A549 (cell line): ENCODE measurements at regions of chr6 and their contacts with region 1.

Region 1: DNA sequence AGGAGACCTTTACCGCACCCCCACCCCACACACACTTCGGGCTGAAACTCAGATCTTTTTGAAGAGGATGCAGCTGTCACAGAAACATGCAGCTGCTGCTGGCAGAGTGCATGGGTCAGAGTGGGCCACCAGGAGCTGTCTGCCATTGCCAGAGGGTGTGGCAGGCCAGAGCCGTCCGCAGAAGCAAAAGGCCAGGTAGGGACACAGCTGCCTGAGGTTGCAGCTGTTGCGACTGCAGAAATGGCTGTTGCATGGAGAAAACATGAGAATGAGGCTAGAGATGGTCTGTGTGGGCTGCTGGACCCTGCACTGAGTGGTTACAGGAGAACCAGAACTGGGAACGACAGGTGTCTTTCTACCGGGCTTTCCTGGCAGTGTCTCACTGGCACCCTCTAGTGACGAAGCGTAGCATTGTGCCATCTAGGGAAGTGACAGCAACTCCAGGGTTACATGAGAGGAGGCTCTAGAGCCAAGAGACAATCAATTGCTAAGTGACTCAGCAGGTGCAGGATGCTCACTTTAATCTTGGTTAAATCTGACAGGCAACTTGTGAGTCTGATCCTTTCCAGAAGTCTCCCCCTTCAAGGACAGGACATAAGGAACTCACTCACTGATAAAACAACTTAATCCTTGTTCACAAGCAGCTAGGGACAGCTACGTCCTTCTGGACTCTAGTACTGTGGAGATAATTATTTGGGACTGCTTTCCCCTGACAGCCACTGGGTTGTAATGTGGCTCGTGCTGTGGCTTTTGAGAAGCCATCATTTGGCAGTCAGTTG is 29.1 kb upstream of the SERPINB9 start:
- DNase-seq: peak; percentile 78 to 83
- ATAC-seq: peak; percentile 99
- H3K4me3 ChIP-seq: no peak overlapping the region
- H3K27ac ChIP-seq: peak overlapping the region; percentile 25 to 38; a peak in 3 of 6 replicates
- H3K4me1 ChIP-seq: peaks cover 7% of the 10 kb centered on the region; the same call in 2 of the 3 replicates
- CTCF ChIP-seq: peak; percentile 89
- EP300 ChIP-seq: no peak
- POLR2A ChIP-seq: no peak
- RAD21 ChIP-seq: peak; percentile 85 to 88

Region 2: DNA sequence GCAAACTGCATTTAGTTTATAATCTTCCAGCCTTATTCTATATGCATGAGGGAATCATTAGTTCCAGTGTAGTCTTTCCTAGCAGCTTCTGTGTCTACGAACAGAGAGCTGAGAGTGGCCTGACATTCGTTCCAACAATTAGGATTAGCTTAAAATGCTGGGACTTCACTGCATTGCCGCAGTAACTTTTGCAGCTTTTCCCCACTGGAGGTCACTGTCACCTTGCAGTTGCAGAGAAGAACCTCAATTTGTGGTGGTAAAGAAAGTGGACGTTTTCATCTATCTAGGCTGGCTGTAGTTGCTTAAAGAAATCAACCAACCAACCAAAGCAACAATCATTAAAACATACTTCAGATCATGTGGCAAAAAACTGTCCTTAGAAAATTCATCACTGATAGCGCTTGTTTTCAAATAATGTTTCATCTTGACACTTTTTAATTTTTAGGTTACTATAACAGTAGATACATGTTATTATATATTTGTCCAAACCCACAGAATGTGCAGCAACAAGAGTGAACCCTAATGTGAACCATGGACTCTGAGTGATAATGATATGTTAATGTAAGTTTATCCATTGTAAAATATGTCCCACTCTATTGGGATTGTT is 193.7 kb before region 1 on chr6:
- CTCF ChIA-PET with region 1: interaction called, 12 read pairs
- POLR2A ChIA-PET with region 1: interaction called, 3 read pairs
- DNase-seq: peak; percentile 31 to 53
- ATAC-seq: peak; percentile 76 to 82; a peak in 5 of 6 replicates
- H3K4me3 ChIP-seq: no peak overlapping the region
- H3K27ac ChIP-seq: no peak overlapping the region
- H3K4me1 ChIP-seq: no peaks in the 10 kb centered on the region
- CTCF ChIP-seq: peak; percentile 65
- EP300 ChIP-seq: no peak
- POLR2A ChIP-seq: no peak
- RAD21 ChIP-seq: peak; percentile 69 to 82

Region 3: DNA sequence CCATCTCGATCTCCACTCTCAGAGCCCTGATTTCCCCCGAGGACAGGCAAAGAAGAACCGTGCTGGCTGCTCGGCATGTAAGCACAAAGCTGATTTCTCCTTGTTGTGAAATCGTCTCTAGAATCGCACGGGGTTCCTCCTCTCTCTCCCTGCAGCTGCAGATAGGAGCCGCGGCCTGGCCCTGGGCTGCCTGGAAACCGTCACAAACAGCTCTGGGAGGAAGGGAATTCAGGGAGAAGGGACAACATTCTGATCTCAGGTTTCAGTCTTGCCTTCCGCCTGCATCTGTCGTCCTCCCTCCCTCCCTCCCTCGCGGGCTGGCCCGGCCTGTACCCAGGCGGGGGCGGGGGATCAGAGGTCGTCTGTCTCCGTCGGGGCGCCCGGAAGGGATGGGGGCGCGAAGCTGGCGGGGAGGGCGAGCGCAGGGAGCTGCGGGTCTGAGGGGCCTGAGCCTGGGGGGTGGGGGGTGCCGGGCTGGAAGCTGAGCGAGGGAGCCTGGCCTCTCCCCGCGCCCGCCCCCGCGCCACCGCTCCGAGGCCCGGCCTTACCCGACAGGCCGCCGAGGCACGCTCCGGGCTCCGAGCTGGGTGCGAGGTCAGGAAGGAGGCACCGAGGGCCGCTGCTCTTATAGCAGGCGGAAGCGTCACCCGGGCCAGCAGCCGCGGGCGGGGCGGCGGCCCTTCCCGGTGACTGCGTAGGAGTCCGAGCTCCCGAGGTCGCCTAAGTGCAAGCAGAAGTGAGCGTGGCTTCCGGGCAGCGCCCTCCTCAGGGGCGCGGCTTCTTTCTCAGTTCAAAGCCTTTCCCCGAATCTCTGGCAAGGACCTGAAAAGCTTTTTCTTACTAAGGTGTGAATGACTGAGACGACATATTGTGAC is 90.7 kb before region 1 on chr6 and contains the start of gene SERPINB1:
- CTCF ChIA-PET with region 1: interaction called, 244 read pairs
- POLR2A ChIA-PET with region 1: interaction called, 4 read pairs
- DNase-seq: peak; percentile 47 to 90
- ATAC-seq: peak; percentile 74 to 81
- H3K4me3 ChIP-seq: peak within 1 kb of the TSS; percentile 71
- H3K27ac ChIP-seq: peak within 1 kb of the TSS; percentile 94 to 99
- H3K4me1 ChIP-seq: peaks cover 41% of the 10 kb centered on the region
- CTCF ChIP-seq: no peak
- EP300 ChIP-seq: no peak
- POLR2A ChIP-seq: peak; percentile 75
- RAD21 ChIP-seq: 0 out of 5 replicates have a peak, but pooled peaks of 1 of the 2 experiments have one; percentile 9
- polyA plus RNA-seq, gene SERPINB1: 98.6 and 135 TPM in 2 replicates

Region 4: DNA sequence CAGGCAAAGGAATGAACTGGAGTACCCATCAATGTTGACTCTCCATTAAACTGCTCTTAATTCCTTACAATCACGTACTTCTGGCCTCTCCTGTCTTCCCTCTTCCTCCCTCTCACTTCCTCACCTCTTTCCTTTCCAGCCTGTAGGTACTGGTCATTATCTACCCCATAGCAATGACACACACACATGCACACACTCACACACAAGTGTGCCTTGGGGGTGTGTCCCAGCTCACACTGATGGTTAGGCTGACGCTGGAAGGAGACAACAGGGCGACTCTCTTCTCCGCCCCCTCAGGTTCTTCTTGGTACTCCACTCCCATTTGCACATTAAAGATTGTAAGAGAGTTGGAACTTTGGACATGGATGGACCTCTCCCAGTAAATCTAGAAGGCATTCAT is 15.1 kb before region 1 on chr6:
- CTCF ChIA-PET with region 1: interaction called, 16 read pairs
- POLR2A ChIA-PET with region 1: no interaction called
- DNase-seq: peak in 1 of 2 experiments; percentile 6
- ATAC-seq: peak; percentile 54 to 62; a peak in 3 of 6 replicates
- H3K4me3 ChIP-seq: no peak overlapping the region
- H3K27ac ChIP-seq: no peak overlapping the region
- H3K4me1 ChIP-seq: no peaks in the 10 kb centered on the region
- CTCF ChIP-seq: no peak
- EP300 ChIP-seq: no peak
- POLR2A ChIP-seq: no peak
- RAD21 ChIP-seq: no peak

Region 5: DNA sequence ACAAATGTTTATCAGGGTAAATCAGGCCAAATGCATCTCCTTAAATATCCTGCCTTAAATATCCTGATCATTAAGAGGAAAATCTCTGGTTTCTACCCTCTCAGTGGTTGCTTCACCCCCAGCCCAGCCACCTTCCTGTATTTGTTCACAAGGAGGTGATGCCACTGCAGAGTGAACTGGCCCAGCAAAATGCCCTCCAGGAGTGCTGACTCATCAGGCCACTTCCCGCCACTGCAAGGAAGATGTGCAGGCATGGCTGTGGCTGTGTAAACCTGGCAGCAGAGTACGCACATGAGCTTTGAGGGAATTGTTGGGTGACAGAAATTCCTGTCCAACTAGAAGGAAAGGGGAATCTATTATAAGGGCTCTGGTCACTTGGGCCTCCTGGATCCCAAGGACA is 81.3 kb after region 1 on chr6:
- CTCF ChIA-PET with region 1: no interaction called
- POLR2A ChIA-PET with region 1: no interaction called
- DNase-seq: peak; percentile 40 to 66
- ATAC-seq: peak; percentile 72 to 78
- H3K4me3 ChIP-seq: no peak overlapping the region
- H3K27ac ChIP-seq: peak overlapping the region; percentile 62 to 85; a peak in 5 of 6 replicates
- H3K4me1 ChIP-seq: peaks cover 15% of the 10 kb centered on the region
- CTCF ChIP-seq: no peak
- EP300 ChIP-seq: no peak
- POLR2A ChIP-seq: no peak
- RAD21 ChIP-seq: no peak